B cell (primary cell): ENCODE measurements at regions of chr17 and their contacts with region 1.

Region 1: DNA sequence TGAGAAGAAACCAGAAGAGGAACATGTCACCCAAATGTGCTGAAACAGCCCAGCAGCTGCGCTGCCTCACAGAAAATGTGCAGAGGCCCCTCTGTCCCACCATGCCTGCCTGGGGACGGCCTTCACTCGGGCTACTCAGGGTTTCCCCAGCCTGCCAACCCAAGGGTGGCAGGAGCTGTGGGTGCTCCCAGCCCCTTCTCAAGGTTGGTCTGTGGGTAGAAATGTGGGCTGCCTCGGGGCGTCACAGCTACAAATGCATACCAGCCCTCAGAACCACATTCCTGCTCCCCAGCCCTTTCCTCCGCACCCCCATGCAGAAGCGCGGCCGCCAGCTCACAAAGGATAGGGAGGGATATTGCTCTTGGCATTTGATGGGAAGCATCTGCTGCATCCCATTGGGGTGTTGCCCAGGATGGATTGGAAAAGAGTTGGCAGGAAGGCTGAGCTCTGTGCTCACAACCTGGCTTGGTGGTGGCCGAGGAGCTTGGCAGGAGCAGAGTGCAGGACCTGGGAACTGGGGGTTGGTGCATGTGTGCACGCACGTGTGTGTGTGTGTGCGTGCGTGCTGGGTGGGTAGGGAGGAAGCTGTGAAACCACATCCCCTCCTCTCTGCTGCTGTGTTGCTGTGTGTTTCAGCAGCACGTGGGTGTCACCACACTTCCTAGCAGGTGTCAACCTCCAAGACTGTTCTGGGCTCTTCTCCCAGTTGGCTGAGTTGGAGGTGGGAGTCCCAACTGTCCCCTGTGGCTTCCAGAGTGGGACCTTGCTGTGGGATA is 304.4 kb downstream of the SEC14L1 start:
- DNase-seq: peak; percentile 95
- ATAC-seq: peak; percentile 50
- H3K4me3 ChIP-seq: peak overlapping the region in 4 of 5 experiments; percentile 32 to 54 (median 49)
- H3K4me3 Mint-ChIP-seq: peak overlapping the region; percentile 79
- H3K27ac ChIP-seq: peak overlapping the region; percentile 96 to 100
- H3K27ac Mint-ChIP-seq: peak overlapping the region; percentile 98
- H3K4me1 ChIP-seq: peaks cover 89 to 100% of the 10 kb centered on the region in 2 donors
- H3K4me1 Mint-ChIP-seq: peaks cover 87% of the 10 kb centered on the region
- H3K27me3 ChIP-seq: no peaks in the 10 kb centered on the region
- H3K27me3 Mint-ChIP-seq: no peaks in the 10 kb centered on the region
- CTCF ChIP-seq: no peak

Region 2: DNA sequence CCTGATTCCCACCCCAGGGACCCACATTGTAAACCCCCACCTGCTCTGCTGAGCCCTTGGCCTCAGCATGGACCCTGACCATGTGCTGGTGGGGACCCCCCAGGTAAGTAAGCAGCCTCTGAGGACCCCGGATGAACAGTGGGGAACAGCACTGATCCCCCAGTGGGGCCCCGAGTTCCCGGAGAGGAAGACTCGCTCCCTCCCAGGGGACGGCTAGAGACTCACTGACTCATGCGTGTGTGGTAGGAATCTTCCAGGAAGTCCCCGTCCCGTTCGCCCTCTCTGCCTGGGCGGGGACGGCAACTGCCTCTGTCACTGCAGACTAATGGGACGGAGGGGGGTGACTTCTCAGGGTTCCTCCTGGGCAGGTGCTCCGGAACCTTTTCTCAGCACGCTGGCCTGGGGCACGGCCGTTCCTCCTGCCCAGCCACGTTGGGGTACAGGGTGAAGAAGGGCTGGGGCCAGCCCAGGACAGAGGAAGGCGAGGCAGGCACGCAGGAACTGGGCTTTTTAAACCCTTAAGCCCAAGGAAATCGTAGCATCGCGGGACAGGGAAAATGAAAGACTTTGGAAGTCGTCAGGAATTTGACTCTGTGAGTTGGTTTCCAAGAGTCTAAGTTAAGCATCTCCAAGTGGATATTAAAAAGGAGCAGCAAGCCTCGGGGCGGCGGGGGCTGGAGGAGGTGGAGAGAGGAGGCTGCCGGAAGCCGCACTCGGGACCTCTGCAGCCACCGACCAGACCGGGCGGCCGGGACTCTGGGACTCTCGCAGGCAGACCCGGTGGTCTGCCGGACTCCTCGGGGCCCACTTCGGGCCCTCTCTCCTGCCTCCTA is 125.7 kb before region 1 on chr17:
- CTCF ChIA-PET with region 1: no interaction called
- POLR2A ChIA-PET with region 1: interaction called, 31 read pairs
- intact Hi-C with region 1: no loop called
- DNase-seq: peak; percentile 84
- ATAC-seq: peak; percentile 34
- H3K4me3 ChIP-seq: peak overlapping the region in 4 of 5 experiments; percentile 16 to 51 (median 33)
- H3K4me3 Mint-ChIP-seq: peak overlapping the region; percentile 91
- H3K27ac ChIP-seq: peak overlapping the region; percentile 53 to 75
- H3K27ac Mint-ChIP-seq: peak overlapping the region; percentile 90
- H3K4me1 ChIP-seq: peaks cover 62 to 66% of the 10 kb centered on the region in 2 donors
- H3K4me1 Mint-ChIP-seq: peaks cover 65% of the 10 kb centered on the region
- H3K27me3 ChIP-seq: no peaks in the 10 kb centered on the region
- H3K27me3 Mint-ChIP-seq: no peaks in the 10 kb centered on the region
- CTCF ChIP-seq: no peak

Region 3: DNA sequence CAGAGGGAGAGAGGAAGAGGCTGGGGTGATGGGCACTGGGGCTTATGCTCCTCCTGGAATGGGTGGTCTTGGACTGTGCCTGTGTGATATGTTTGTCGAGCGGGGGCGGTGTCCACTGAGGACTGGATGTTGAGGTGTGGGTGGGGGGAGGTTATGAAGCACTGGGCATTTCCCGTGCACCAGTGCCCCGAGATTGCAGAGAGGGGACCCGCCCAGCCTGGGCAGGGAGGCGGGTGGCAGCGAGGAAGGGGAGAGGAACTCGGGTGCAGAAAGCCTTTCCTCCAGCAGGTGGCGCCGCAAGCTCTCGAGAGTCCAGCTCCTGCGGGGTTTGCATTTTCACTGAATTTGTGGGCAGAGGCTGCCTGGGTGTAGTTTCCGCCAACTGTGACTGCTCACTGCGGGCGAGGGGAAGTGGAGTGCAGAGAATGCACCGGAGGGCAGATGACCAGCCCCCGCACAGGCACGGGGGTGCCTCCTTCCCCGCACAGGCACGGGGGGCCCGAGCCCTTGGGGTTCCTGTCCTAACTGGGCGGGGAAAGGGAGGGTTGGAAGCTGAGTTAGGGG is 113.8 kb before region 1 on chr17:
- CTCF ChIA-PET with region 1: interaction called, 26 read pairs
- POLR2A ChIA-PET with region 1: interaction called, 7 read pairs
- intact Hi-C with region 1: no loop called
- DNase-seq: peak; percentile 94
- ATAC-seq: peak; percentile 89
- H3K4me3 ChIP-seq: peak overlapping the region in 4 of 5 experiments; percentile 21 to 65 (median 36)
- H3K4me3 Mint-ChIP-seq: peak overlapping the region; percentile 82
- H3K27ac ChIP-seq: peak overlapping the region; percentile 67 to 77
- H3K27ac Mint-ChIP-seq: peak overlapping the region; percentile 85
- H3K4me1 ChIP-seq: peaks cover 41 to 66% of the 10 kb centered on the region in 2 donors
- H3K4me1 Mint-ChIP-seq: peaks cover 53% of the 10 kb centered on the region
- H3K27me3 ChIP-seq: no peaks in the 10 kb centered on the region
- H3K27me3 Mint-ChIP-seq: no peaks in the 10 kb centered on the region
- CTCF ChIP-seq: peak; percentile 93

Region 4: DNA sequence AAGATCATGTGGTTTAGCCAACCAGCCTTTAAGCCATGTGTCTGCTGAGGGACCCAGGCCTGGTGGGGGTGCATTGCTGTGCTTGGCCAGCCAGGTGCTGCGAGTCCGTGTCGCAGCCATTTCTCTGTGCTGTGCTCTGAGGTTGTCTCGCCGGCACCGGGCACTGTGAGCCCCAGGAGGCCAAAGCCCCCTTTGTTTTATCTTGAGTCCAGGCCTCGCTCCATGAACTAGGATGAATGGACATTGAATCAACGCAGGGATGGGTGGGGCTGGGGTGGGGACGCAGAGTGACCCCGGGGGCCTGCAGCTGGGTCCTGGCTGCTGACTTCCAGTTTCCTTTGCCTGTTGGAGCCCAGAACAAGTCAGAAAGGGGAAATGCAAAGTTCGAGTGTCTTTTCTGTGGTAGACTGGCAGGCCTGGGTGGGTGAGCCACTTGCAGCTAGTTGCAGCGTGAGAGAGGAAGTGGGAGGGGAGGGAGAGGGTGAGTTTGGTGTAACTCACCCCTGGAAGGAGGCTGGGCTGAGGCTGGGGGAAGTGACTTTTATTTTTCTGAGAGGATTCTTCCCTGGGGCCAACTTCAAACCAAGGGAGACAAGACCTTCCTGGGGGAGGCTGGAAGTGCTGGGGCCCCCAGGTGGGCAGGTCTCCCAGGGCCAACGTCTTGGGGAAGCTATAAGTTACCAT is 20.3 kb after region 1 on chr17:
- CTCF ChIA-PET with region 1: interaction called, 31 read pairs
- POLR2A ChIA-PET with region 1: interaction called, 45 read pairs
- intact Hi-C with region 1: loop called (anchors 1 kb)
- DNase-seq: peak; percentile 94
- ATAC-seq: peak; percentile 78
- H3K4me3 ChIP-seq: peak overlapping the region; percentile 12 to 56 (median 38)
- H3K4me3 Mint-ChIP-seq: peak overlapping the region; percentile 81
- H3K27ac ChIP-seq: peak overlapping the region; percentile 55 to 89
- H3K27ac Mint-ChIP-seq: peak overlapping the region; percentile 95
- H3K4me1 ChIP-seq: peaks cover 90 to 98% of the 10 kb centered on the region in 2 donors
- H3K4me1 Mint-ChIP-seq: peaks cover 86% of the 10 kb centered on the region
- H3K27me3 ChIP-seq: no peaks in the 10 kb centered on the region
- H3K27me3 Mint-ChIP-seq: no peaks in the 10 kb centered on the region
- CTCF ChIP-seq: no peak

Region 5: GRCh38 chr17:77494664-77495435 is 49.7 kb after region 1 on chr17:
- CTCF ChIA-PET with region 1: interaction called, 48 read pairs
- POLR2A ChIA-PET with region 1: interaction called, 10 read pairs
- intact Hi-C with region 1: no loop called
- DNase-seq: peak; percentile 86
- ATAC-seq: peak; percentile 74
- H3K4me3 ChIP-seq: no peak overlapping the region
- H3K4me3 Mint-ChIP-seq: peak overlapping the region; percentile 44
- H3K27ac ChIP-seq: peak overlapping the region; percentile 28
- H3K27ac Mint-ChIP-seq: peak overlapping the region; percentile 90
- H3K4me1 ChIP-seq: peaks cover 14 to 43% of the 10 kb centered on the region in 2 donors
- H3K4me1 Mint-ChIP-seq: peaks cover 32% of the 10 kb centered on the region
- H3K27me3 ChIP-seq: no peaks in the 10 kb centered on the region
- H3K27me3 Mint-ChIP-seq: no peaks in the 10 kb centered on the region
- CTCF ChIP-seq: peak; percentile 98